CD8-positive, alpha-beta memory T cell (primary cell): ENCODE measurements at regions of chr19 and their contacts with region 1.

Region 1: DNA sequence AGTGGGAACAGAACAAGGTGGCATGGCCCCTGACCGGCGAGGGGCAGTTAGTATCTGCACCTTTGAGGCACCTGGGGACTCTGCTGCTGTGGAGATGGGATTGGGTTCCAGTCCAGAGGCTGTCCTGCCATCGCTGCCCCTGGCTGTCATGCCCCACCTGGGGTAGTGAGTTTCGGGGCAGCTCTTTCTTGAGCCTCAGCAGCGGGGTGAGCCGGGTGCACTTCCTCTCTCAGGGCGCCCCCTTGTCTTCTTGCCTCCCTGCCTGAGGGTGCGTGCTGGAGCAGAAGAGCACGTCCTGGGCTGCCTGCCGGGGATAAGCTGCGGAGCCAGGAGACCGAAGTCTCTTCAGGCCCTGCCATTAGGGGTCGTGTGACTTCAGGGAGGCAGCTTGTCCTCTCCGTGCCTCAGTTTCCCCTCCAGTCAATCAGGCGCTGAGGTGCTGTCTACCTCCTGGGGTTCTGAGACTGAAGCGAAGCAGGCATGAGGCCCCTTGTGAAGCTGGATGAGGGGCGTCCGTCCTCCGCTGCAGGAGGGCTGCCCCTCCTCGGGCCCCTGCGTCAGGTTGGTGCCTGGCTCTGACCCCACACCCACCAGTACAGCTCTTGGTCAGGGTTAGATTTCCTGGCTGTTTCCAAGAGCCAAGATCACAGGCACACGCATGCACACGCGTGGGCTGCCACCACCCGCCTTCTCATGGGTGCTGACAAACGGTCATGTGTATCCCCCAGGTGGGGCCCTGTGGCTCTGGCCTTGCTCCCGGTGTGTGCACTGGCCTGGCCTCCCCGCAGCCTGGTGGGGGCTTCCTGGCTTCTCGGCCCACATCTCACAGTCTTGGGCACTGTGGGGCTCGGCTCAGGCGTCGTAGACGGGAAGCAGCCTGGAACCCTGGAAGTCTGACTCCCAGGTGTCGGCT is 8.3 kb downstream of the GNA11 start:
- DNase-seq: no peak
- H3K4me3 ChIP-seq: no peak overlapping the region
- H3K4me3 Mint-ChIP-seq: no peak overlapping the region
- H3K27ac ChIP-seq: no peak overlapping the region
- H3K27ac Mint-ChIP-seq: no peak overlapping the region
- H3K4me1 ChIP-seq: peaks cover 19% of the 10 kb centered on the region
- H3K4me1 Mint-ChIP-seq: peaks cover 9 to 13% (median 13%) of the 10 kb centered on the region in 3 donors
- H3K27me3 ChIP-seq: no peaks in the 10 kb centered on the region
- H3K27me3 Mint-ChIP-seq: peaks cover 13 to 18% of the 10 kb centered on the region in 2 donors

Region 2: DNA sequence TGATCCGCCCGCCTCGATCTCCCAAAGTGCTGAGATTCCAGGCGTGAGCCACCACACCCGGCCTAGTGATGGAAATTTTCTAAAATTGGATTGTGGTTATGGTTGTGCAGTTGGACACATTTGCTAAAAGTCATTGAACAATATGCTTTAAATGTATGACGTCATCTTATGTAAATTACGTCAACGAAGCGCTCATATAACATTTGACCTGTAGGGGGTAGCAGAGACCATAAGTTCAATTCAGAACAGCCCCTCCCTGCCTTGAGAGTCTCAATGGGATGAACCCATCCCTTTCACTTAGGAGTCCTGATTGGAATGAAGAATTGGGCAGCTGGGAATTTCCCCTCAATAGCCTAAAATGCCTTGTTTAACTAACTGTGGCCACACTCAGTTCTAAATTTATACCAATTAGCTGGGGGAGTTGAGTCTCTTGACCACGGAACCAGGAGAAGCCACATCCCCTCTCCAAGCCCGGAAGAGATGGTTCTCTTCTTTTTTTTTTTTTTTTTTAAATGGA is 140.4 kb before region 1 on chr19:
- CTCF ChIA-PET with region 1: interaction called, 53 read pairs
- POLR2A ChIA-PET with region 1: no interaction called
- DNase-seq: peak in 4 of 5 donors; percentile 49 to 80 (median 64)
- H3K4me3 ChIP-seq: no peak overlapping the region
- H3K4me3 Mint-ChIP-seq: peak overlapping the region in 2 of 7 donors; percentile 0 to 33
- H3K27ac ChIP-seq: no peak overlapping the region
- H3K27ac Mint-ChIP-seq: peak overlapping the region in 7 of 8 donors; percentile 13 to 91 (median 66)
- H3K4me1 ChIP-seq: peaks cover 4% of the 10 kb centered on the region
- H3K4me1 Mint-ChIP-seq: peaks cover 5 to 6% (median 5%) of the 10 kb centered on the region in 3 donors
- H3K27me3 ChIP-seq: no peaks in the 10 kb centered on the region
- H3K27me3 Mint-ChIP-seq: peaks cover 1 to 5% of the 10 kb centered on the region in 2 donors

Region 3: GRCh38 chr19:2977001-2977685 is 125.3 kb before region 1 on chr19 and contains the start of gene TLE6:
- CTCF ChIA-PET with region 1: interaction called, 10 read pairs
- POLR2A ChIA-PET with region 1: no interaction called
- DNase-seq: peak; percentile 81 to 94 (median 90)
- H3K4me3 ChIP-seq: peak within 1 kb of the TSS; percentile 76
- H3K4me3 Mint-ChIP-seq: peak within 1 kb of the TSS; percentile 83 to 95 (median 92)
- H3K27ac ChIP-seq: peak within 1 kb of the TSS; percentile 40
- H3K27ac Mint-ChIP-seq: peak within 1 kb of the TSS in 7 of 8 donors; percentile 37 to 91 (median 78)
- H3K4me1 ChIP-seq: peaks cover 9% of the 10 kb centered on the region
- H3K4me1 Mint-ChIP-seq: peaks cover 15 to 20% (median 16%) of the 10 kb centered on the region in 3 donors
- H3K27me3 ChIP-seq: no peaks in the 10 kb centered on the region
- H3K27me3 Mint-ChIP-seq: peaks cover 18 to 19% of the 10 kb centered on the region in 2 donors
- total RNA-seq, gene TLE6: 1.1 to 1.3 TPM

Region 4: DNA sequence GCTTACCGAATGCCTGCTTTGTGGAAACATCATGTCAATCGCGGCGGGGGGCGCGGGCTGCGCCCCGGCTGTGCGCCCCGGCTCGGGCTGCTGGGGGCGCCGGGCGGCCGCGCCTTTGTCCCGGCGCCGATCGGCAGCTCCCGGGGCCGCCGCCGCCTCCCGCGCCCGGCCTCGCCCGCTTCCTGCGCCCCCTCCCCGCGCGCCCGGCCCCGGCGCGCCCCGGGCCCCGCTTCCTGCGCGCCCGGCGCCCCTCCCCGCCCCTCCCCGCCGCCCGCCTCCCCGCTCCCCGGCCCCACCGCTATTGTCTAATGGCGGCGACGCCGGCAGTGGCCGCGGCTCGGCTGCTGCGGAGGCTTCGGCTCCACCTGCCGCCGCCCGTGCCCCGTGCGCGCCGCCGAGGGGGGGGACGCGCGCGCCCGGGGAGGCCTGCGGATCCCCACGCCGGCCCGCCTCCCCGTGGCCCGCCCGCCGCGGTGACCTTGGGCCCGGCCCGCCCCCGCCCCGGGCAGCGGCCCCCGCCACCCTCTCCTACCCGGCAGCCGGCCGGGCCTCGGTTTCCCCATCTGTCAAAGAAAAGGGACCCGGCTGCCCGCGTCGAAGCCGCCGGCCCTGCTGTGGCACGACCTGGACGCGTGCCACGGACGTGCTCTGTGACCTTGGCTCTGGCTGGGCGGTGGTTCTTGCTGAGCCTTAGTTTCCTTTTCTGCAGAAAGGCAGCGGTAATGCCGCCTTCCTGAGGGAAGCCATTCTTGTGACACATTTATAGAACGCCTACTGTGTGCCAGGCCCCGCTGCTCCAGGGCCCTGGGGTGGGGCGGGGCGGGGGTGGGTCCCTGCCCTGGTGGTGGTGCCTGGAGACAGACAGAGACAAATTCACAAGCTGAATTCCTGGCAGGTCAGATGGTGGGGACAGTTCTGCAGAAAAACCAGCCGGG is 40.0 kb before region 1 on chr19 and contains the start of gene TLE5:
- CTCF ChIA-PET with region 1: interaction called, 10 read pairs
- POLR2A ChIA-PET with region 1: no interaction called
- DNase-seq: peak; percentile 67 to 85 (median 75)
- H3K4me3 ChIP-seq: peak within 1 kb of the TSS; percentile 97
- H3K4me3 Mint-ChIP-seq: peak within 1 kb of the TSS; percentile 89 to 96 (median 91)
- H3K27ac ChIP-seq: peak within 1 kb of the TSS; percentile 79
- H3K27ac Mint-ChIP-seq: peak within 1 kb of the TSS; percentile 87 to 99 (median 94)
- H3K4me1 ChIP-seq: peaks cover 49% of the 10 kb centered on the region
- H3K4me1 Mint-ChIP-seq: peaks cover 29 to 42% (median 40%) of the 10 kb centered on the region in 3 donors
- H3K27me3 ChIP-seq: no peaks in the 10 kb centered on the region
- H3K27me3 Mint-ChIP-seq: no peaks in the 10 kb centered on the region
- total RNA-seq, gene TLE5: 335 to 352 TPM

Region 5: GRCh38 chr19:3132971-3133792 is 30.7 kb after region 1 on chr19:
- CTCF ChIA-PET with region 1: no interaction called
- POLR2A ChIA-PET with region 1: no interaction called
- DNase-seq: peak; percentile 57 to 84 (median 77)
- H3K4me3 ChIP-seq: peak overlapping the region; percentile 20
- H3K4me3 Mint-ChIP-seq: peak overlapping the region; percentile 10 to 80 (median 74)
- H3K27ac ChIP-seq: peak overlapping the region; percentile 29
- H3K27ac Mint-ChIP-seq: peak overlapping the region; percentile 72 to 99 (median 95)
- H3K4me1 ChIP-seq: peaks cover 15% of the 10 kb centered on the region
- H3K4me1 Mint-ChIP-seq: peaks cover 20 to 31% (median 21%) of the 10 kb centered on the region in 3 donors
- H3K27me3 ChIP-seq: peaks cover 3% of the 10 kb centered on the region
- H3K27me3 Mint-ChIP-seq: peaks cover 3 to 11% of the 10 kb centered on the region in 2 donors